GM12878 (cell line): ENCODE measurements at regions of chr15 and their contacts with region 1.

Region 1: DNA sequence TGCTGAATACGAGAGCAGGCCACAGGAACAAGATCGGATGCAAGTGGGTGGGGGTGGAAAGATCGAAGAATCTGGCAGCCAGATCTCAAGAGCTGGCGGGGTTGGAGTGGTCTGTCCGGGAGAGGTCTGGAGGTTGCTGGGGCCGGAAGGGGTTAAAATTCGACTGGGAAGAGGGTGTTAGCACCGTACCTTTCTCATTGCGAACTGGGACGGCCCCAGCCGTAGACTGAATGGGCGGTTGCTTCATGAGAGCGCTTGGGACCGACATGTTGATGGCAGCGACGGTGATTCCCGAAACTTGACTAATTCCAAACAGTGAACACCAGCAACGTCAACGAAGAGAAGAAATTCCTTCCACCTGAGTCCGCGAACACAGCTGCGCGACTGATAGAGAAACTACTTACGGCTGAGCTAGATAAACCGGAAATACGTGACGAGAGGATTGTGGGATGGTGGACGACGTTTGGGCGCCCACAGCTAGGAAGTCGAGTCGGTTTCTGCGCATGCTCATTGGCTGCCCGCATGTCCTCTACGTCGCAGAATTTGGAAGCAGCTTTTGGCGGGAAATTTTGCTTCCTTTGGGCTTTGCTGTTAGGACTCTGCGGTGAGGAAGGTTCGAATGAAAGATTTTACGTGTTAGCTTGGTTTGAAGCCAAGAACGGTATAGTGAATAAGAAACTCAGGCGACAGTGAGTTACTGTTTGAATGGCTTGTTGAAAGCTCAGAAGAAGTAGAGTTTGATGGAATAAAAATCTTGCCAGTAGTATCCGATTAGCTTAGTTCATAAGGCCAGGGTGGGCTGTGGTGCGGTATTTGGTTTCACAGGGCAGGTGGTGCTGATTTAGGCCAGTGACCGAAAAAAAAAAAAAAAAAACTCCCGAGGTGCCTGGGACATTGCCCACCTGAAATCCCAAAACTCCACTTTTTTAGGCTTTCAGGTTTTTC is at the start of gene MFAP1:
- DNase-seq: peak; percentile 93
- ATAC-seq: peak; percentile 78
- H3K4me3 ChIP-seq: peak within 1 kb of the TSS; percentile 78
- H3K27ac ChIP-seq: peak within 1 kb of the TSS; percentile 86
- H3K4me1 ChIP-seq: peaks cover 10% of the 10 kb centered on the region; the same call in 1 of the 2 replicates
- H3K27me3 ChIP-seq: no peaks in the 10 kb centered on the region
- CTCF ChIP-seq: no peak
- EP300 ChIP-seq: 0 out of 4 replicates have a peak, but pooled peaks of 1 of the 2 experiments have one; percentile 6
- POLR2A ChIP-seq: peak; percentile 97
- RAD21 ChIP-seq: no peak
- polyA plus RNA-seq, gene MFAP1: 34.9 to 51.6 TPM

Region 2: DNA sequence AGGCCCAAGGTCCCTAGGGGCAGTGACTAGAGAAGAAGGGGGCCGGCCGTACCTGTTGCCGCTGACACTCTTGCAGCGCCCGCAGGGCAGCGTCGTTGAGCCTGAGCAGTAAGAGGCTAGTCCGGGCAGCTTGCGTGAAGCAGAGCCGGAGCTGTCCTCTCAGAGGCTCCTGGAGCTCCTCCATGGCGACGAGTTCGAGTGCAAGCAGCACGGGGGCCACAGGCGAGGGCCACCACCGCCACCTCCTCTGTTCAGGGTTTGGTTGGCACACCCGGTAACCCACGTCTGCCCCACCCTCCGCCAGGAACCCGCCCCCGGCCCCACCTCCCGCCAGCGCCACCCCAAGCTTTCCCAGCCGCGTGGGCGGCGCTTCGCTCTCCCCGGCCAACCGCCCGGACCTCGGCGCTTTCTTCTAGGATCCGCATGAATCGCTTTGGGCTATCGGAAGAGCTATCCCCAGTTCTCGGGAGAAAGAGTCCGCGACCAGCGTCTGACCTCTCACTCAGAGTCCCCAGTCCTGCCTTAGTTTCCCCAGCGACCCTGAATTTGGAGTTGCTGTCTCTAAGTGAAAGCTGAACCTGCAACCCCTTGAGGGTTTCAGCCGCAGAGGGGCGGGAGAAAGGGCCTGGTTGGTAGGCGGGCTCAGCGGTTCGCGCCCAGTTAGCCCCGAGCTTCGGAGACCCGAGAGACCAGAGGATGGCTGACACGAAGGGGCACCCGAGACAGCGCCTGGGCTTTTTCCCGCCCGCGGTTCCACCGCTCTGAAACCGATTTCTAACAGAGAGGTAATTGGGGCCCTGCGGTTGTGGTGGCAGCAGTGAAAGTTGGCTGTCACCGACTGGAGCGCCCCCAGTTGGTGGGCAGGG is 47.6 kb before region 1 on chr15 and contains the start of gene ELL3:
- CTCF ChIA-PET with region 1: interaction called, 5 read pairs
- POLR2A ChIA-PET with region 1: interaction called, 10 read pairs
- RAD21 ChIA-PET with region 1: interaction called, 12 read pairs
- SMC1A ChIA-PET with region 1: interaction called, 3 read pairs
- in situ Hi-C with region 1: no loop called
- intact Hi-C with region 1: loop called (anchors 5 kb)
- DNase-seq: peak; percentile 78
- ATAC-seq: peak; percentile 86
- H3K4me3 ChIP-seq: peak within 1 kb of the TSS; percentile 78
- H3K27ac ChIP-seq: peak within 1 kb of the TSS; percentile 91
- H3K4me1 ChIP-seq: peaks cover 16% of the 10 kb centered on the region
- H3K27me3 ChIP-seq: no peaks in the 10 kb centered on the region
- CTCF ChIP-seq: peak; percentile 74 to 78 (median 75)
- EP300 ChIP-seq: no peak; a peak in 1 of 4 replicates
- POLR2A ChIP-seq: peak; percentile 70
- RAD21 ChIP-seq: peak; percentile 31; the same call in 1 of the 2 replicates
- polyA plus RNA-seq, gene ELL3: 19.6 to 26.4 TPM

Region 3: GRCh38 chr15:43800286-43801141 is 24.1 kb before region 1 on chr15 and contains the start of gene HYPK:
- CTCF ChIA-PET with region 1: interaction called, 3 read pairs
- POLR2A ChIA-PET with region 1: interaction called, 12 read pairs
- RAD21 ChIA-PET with region 1: interaction called, 15 read pairs
- SMC1A ChIA-PET with region 1: interaction called, 18 read pairs
- in situ Hi-C with region 1: no loop called
- intact Hi-C with region 1: loop called (anchors 2 kb)
- DNase-seq: peak; percentile 55
- ATAC-seq: peak; percentile 93
- H3K4me3 ChIP-seq: peak within 1 kb of the TSS; percentile 78
- H3K27ac ChIP-seq: peak within 1 kb of the TSS; percentile 75
- H3K4me1 ChIP-seq: peaks cover 24% of the 10 kb centered on the region
- H3K27me3 ChIP-seq: no peaks in the 10 kb centered on the region
- CTCF ChIP-seq: no peak
- EP300 ChIP-seq: peak in 1 of 2 experiments; percentile 35; a peak in 2 of 4 replicates
- POLR2A ChIP-seq: peak; percentile 90
- RAD21 ChIP-seq: no peak
- polyA plus RNA-seq, gene HYPK: 8.6 to 11.0 TPM

Region 4: GRCh38 chr15:43808960-43809678 is 15.5 kb before region 1 on chr15:
- CTCF ChIA-PET with region 1: interaction called, 19 read pairs
- POLR2A ChIA-PET with region 1: interaction called, 74 read pairs
- RAD21 ChIA-PET with region 1: interaction called, 27 read pairs
- SMC1A ChIA-PET with region 1: interaction called, 35 read pairs
- in situ Hi-C with region 1: no loop called
- intact Hi-C with region 1: no loop called
- DNase-seq: no peak
- ATAC-seq: peak; percentile 94
- H3K4me3 ChIP-seq: peak overlapping the region; percentile 19; the same call in 1 of the 2 replicates
- H3K27ac ChIP-seq: peak overlapping the region; percentile 59
- H3K4me1 ChIP-seq: peaks cover 26% of the 10 kb centered on the region
- H3K27me3 ChIP-seq: no peaks in the 10 kb centered on the region
- CTCF ChIP-seq: no peak
- EP300 ChIP-seq: peak; percentile 85 to 94; a peak in 3 of 4 replicates
- POLR2A ChIP-seq: no peak
- RAD21 ChIP-seq: no peak

Region 5: GRCh38 chr15:44009056-44009455 is 184.5 kb after region 1 on chr15:
- CTCF ChIA-PET with region 1: no interaction called
- POLR2A ChIA-PET with region 1: no interaction called
- RAD21 ChIA-PET with region 1: no interaction called
- SMC1A ChIA-PET with region 1: no interaction called
- in situ Hi-C with region 1: no loop called
- intact Hi-C with region 1: no loop called
- DNase-seq: no peak
- ATAC-seq: no peak
- H3K4me3 ChIP-seq: no peak overlapping the region
- H3K27ac ChIP-seq: no peak overlapping the region
- H3K4me1 ChIP-seq: no peaks in the 10 kb centered on the region
- H3K27me3 ChIP-seq: no peaks in the 10 kb centered on the region
- CTCF ChIP-seq: no peak
- EP300 ChIP-seq: no peak
- POLR2A ChIP-seq: no peak
- RAD21 ChIP-seq: no peak

Region 6: DNA sequence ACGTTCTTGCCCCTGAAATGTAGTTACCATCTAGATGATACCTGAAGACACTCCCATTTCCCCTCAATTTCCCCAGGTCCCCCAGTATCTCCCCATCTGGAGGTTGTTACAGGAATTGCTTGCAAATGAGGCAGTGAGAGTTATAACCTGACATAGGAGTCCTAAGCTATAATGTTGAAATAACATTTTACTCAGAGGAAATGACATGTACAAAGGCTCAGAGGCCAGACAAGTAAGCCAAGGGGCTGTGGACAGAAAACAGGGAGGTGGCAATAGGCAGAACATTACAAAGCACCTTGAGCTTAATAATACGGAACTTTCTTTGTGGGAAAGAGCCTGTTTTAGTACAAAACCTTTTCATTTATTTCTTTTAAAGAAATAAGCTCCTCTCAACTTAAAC is 198.6 kb after region 1 on chr15:
- CTCF ChIA-PET with region 1: no interaction called
- POLR2A ChIA-PET with region 1: no interaction called
- RAD21 ChIA-PET with region 1: no interaction called
- SMC1A ChIA-PET with region 1: no interaction called
- in situ Hi-C with region 1: no loop called
- intact Hi-C with region 1: no loop called
- DNase-seq: no peak
- ATAC-seq: no peak
- H3K4me3 ChIP-seq: no peak overlapping the region
- H3K27ac ChIP-seq: no peak overlapping the region
- H3K4me1 ChIP-seq: no peaks in the 10 kb centered on the region
- H3K27me3 ChIP-seq: no peaks in the 10 kb centered on the region
- CTCF ChIP-seq: no peak
- EP300 ChIP-seq: no peak
- POLR2A ChIP-seq: no peak
- RAD21 ChIP-seq: peak; percentile 19; the same call in 1 of the 2 replicates